Mammary epithelial cell (primary cell): ENCODE measurements at regions of chr1 and their contacts with region 1.

Region 1: DNA sequence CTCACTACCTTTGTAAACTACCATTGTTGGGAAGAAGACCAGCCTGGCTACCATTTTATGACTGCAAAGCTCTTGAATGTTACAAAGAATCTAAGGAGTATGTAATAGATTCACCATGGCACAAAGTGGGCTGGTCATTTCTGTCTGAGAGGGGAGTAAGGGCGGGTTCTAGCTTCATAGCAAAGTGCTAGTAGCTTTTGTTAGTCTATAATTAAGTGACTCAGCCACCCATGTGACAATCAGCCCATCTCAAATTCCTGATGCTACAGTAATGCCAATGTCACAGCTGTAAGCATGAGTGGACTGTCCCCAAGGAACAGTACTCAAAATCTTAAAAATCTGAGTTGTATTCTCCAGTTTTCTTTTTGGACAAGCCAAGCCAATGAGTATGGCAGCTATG is 15.4 kb upstream of the OTUD3 start:
- DNase-seq: no peak
- H3K4me3 ChIP-seq: no peak overlapping the region
- H3K27ac ChIP-seq: no peak overlapping the region
- H3K4me1 ChIP-seq: peaks cover 16% of the 10 kb centered on the region
- H3K27me3 ChIP-seq: no peaks in the 10 kb centered on the region
- CTCF ChIP-seq: no peak

Region 2: GRCh38 chr1:19852036-19852435 is 14.7 kb before region 1 on chr1:
- CTCF ChIA-PET with region 1: no interaction called
- dilution Hi-C with region 1: no loop called
- in situ Hi-C with region 1: no loop called
- intact Hi-C with region 1: no loop called
- DNase-seq: no peak
- H3K4me3 ChIP-seq: no peak overlapping the region
- H3K27ac ChIP-seq: no peak overlapping the region
- H3K4me1 ChIP-seq: no peaks in the 10 kb centered on the region
- H3K27me3 ChIP-seq: no peaks in the 10 kb centered on the region
- CTCF ChIP-seq: no peak

Region 3: DNA sequence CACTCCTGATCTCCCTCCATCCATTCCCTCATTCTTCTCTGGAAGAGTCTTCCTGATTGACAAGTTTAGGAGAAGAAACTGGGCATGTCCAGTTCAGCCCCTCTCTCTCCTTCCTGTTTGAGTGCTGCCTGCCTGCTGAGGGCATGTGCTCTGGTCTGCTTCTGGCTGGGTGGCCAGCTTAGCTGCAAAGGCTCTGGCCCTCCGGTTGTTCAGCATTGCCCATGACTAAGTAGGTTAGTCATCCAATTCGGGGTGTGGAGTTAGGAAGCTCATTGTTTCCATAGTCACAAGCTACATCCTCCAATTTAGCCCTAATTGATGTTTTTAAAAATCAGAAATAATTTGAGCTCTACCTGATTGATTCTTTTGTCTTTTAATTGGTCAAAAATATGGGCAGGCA is 82.3 kb after region 1 on chr1:
- CTCF ChIA-PET with region 1: no interaction called
- dilution Hi-C with region 1: loop called (anchors 5 kb)
- in situ Hi-C with region 1: no loop called
- intact Hi-C with region 1: no loop called
- DNase-seq: peak; percentile 90
- H3K4me3 ChIP-seq: no peak overlapping the region
- H3K27ac ChIP-seq: peak overlapping the region; percentile 80
- H3K4me1 ChIP-seq: peaks cover 12% of the 10 kb centered on the region
- H3K27me3 ChIP-seq: no peaks in the 10 kb centered on the region
- CTCF ChIP-seq: no peak